CD4-positive, alpha-beta memory T cell (primary cell): ENCODE measurements at regions of chr14 and their contacts with region 1.

Region 1: DNA sequence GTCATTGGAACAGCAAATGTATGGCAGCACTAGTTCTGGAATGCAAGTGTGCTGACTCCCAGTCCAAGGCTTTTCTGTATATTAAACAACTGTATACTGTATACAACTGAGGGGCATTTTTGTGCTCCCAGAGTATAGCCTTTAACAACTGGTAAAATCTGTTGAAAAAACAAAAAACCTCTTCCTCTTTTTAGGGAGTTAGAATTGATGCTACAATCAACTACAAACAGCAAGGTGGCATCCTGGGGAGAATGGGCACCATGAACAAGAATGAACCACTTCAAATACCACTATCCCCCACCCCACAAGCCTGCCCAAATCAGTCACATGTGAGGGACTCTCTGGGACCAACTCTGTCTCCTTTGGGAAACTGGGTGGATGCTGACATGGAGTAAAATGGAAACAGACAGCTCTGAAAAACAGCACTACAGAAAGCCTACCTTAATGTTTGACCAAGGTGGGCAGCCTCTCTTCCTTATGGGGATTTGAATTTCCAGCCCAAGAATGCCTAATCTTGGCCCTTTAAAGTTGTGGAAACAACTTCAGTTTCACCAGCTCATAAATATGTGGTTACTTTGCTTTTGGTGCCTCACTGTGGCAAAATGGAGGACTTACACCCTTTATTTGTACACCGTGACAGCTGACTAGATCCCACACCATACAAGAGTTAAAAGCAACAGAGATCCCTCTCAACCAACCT is 7.5 kb downstream of the VTI1B start:
- DNase-seq: peak; percentile 42 to 45 (median 45)
- H3K4me3 ChIP-seq: no peak overlapping the region
- H3K4me3 Mint-ChIP-seq: no peak overlapping the region
- H3K27ac ChIP-seq: no peak overlapping the region
- H3K27ac Mint-ChIP-seq: peak overlapping the region; percentile 6 to 75 (median 61)
- H3K4me1 ChIP-seq: peaks cover 43% of the 10 kb centered on the region
- H3K4me1 Mint-ChIP-seq: peaks cover 32 to 66% (median 51%) of the 10 kb centered on the region in 4 donors
- H3K27me3 ChIP-seq: no peaks in the 10 kb centered on the region
- H3K27me3 Mint-ChIP-seq: no peaks in the 10 kb centered on the region

Region 2: GRCh38 chr14:67526676-67527459 is 140.0 kb before region 1 on chr14:
- CTCF ChIA-PET with region 1: interaction called, 6 read pairs
- POLR2A ChIA-PET with region 1: no interaction called
- intact Hi-C with region 1: loop called (anchors 1 kb)
- DNase-seq: peak; percentile 30 to 47 (median 31)
- H3K4me3 ChIP-seq: no peak overlapping the region
- H3K4me3 Mint-ChIP-seq: no peak overlapping the region
- H3K27ac ChIP-seq: no peak overlapping the region
- H3K27ac Mint-ChIP-seq: no peak overlapping the region
- H3K4me1 ChIP-seq: no peaks in the 10 kb centered on the region
- H3K4me1 Mint-ChIP-seq: peaks cover 2 to 9% (median 5%) of the 10 kb centered on the region in 4 donors
- H3K27me3 ChIP-seq: peaks cover 15% of the 10 kb centered on the region
- H3K27me3 Mint-ChIP-seq: peaks cover 13 to 44% of the 10 kb centered on the region in 2 donors

Region 3: DNA sequence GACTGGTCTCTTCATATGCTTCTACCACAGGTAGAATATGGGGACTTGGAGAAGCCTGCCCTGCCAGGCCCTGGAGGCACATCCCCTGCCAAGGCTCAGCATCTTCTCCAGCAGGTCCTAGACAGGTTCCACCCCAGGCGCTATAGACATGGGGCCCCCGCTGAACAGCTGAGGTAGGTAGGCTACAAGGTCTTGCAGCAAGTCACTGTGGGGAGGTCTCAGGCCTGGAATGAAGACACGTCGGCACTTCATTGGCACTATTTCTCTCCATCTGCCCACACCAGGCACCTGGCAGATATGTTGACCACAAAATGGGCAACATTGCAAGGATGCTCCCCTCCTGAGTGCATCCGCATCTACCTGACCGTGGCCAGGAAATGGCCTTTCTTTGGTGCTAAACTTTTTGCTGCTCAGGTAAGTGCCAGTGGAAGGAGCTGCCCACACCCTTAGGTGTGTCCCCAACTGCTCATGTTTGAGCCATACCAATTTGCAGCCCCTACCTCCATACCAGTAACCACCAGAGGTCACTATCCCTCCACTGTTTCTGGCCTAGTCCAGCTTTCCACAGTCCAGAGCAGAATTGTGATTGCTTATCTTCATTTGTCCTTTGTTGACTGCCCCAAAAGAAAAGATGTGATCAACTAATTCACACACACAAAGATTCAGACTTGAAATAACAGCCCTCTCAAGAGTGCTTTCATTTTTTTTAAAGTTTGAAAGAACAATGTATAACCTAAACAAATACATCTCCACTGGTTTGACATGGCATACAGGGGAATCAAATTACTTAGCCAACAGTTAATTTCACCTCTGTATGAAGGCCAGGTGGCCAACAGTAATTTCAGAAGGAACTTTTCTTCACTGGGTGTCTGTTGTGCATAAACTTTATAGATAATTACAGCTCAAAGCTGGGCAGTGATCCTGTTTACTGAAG is 82.9 kb before region 1 on chr14:
- CTCF ChIA-PET with region 1: interaction called, 35 read pairs
- POLR2A ChIA-PET with region 1: no interaction called
- intact Hi-C with region 1: loop called (anchors 1 kb)
- DNase-seq: peak in 4 of 5 donors; percentile 14 to 34 (median 30)
- H3K4me3 ChIP-seq: no peak overlapping the region
- H3K4me3 Mint-ChIP-seq: no peak overlapping the region
- H3K27ac ChIP-seq: no peak overlapping the region
- H3K27ac Mint-ChIP-seq: no peak overlapping the region
- H3K4me1 ChIP-seq: no peaks in the 10 kb centered on the region
- H3K4me1 Mint-ChIP-seq: no peaks in the 10 kb centered on the region
- H3K27me3 ChIP-seq: no peaks in the 10 kb centered on the region
- H3K27me3 Mint-ChIP-seq: no peaks in the 10 kb centered on the region